Endothelial cell of umbilical vein (primary cell): ENCODE measurements at regions of chr1 and their contacts with region 1.

Region 1: DNA sequence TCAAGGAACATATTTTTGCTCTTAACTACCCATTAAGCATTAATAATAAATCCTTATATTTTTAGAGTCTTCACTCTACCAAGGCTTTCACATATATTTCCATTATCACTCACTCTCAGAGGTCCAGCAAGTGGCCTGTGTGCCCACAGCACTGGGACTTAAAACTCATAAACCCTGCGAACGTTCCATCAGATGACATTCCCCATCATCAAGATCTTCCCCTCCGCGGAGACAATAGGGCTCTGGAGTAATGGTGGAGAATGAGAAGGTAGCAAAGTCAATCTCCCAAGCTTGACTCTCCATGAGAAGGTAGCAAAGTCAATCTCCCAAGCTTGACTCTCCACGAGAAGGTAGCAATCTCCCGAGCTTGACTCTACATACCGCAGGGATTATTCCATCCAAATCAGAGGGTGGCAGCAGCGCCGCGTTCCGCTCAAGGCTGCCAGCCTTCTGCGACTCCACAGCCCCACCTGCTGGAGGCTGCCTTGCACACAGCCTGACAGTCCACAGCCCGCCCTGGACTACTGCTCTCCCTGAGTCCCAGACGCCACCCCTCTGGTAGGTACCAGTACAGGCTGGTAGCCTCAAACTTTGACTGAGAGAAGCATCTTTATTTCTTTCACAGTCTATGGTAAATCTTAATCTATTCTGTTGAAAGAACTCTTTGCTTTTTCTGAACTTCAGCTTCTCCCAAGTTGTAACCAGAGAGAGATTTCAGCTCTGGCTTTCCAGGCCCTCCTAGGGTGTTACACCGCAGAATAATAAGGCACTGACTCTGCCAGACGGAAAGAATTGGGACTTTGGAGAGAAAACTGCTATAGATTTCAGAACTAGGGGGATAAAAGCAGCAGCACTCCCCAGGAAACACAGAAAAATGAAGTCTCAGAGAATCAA is 26.4 kb upstream of the CTTNBP2NL start:
- DNase-seq: peak; percentile 87
- H3K4me3 ChIP-seq: no peak overlapping the region
- H3K27ac ChIP-seq: no peak overlapping the region
- H3K4me1 ChIP-seq: no peaks in the 10 kb centered on the region
- H3K27me3 ChIP-seq: peaks cover 10 to 12% of the 10 kb centered on the region in 2 experiments
- CTCF ChIP-seq: peak; percentile 98 to 99
- POLR2A ChIP-seq: no peak

Region 2: GRCh38 chr1:112317140-112317539 is 52.5 kb before region 1 on chr1:
- CTCF ChIA-PET with region 1: no interaction called
- POLR2A ChIA-PET with region 1: no interaction called
- dilution Hi-C with region 1: no loop called
- intact Hi-C with region 1: no loop called
- DNase-seq: no peak
- H3K4me3 ChIP-seq: no peak overlapping the region
- H3K27ac ChIP-seq: no peak overlapping the region
- H3K4me1 ChIP-seq: peaks cover 4% of the 10 kb centered on the region
- H3K27me3 ChIP-seq: peaks cover 2 to 4% of the 10 kb centered on the region in 2 experiments
- CTCF ChIP-seq: no peak
- POLR2A ChIP-seq: no peak

Region 3: GRCh38 chr1:112383759-112384356 is 14.2 kb after region 1 on chr1:
- CTCF ChIA-PET with region 1: interaction called, 35 read pairs
- POLR2A ChIA-PET with region 1: no interaction called
- dilution Hi-C with region 1: no loop called
- intact Hi-C with region 1: loop called (anchors 2 kb)
- DNase-seq: no peak
- H3K4me3 ChIP-seq: no peak overlapping the region
- H3K27ac ChIP-seq: no peak overlapping the region
- H3K4me1 ChIP-seq: peaks cover 16% of the 10 kb centered on the region
- H3K27me3 ChIP-seq: peaks cover 0 to 3% of the 10 kb centered on the region in 2 experiments
- CTCF ChIP-seq: no peak
- POLR2A ChIP-seq: no peak